A673 (cell line): ENCODE measurements at regions of chr1 and their contacts with region 1.

Region 1: DNA sequence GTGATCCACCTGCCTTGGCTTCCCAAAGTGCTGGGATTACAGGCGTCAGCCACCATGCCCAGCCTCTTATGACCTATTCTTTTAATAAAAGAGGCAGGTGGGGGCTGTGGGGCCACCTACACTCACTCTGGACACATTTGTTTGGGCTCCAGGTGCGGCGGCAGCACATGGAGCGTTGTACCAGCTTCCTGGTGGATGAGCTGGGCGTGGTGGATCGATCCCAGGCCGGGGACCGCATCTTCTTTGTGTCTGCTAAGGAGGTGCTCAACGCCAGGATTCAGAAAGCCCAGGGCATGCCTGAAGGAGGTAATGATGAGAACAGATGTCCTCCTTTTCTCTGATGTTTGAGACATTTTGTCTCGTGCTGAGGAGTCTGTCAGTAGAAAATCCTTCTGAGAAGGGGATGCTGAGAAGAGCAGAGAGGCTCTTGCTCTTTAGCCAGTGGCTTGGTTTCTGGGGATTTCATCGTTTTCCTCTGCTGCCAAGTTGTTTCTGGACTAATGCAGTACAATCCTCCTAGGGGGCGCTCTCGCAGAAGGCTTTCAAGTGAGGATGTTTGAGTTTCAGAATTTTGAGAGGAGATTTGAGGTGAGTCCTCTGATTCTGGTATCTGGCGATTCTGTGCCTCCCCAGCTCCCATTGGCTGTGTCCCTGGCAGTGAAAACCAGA is 17.9 kb upstream of the MIIP start:
- DNase-seq: peak; percentile 77
- H3K4me3 ChIP-seq: no peak overlapping the region
- H3K27ac ChIP-seq: peak overlapping the region; percentile 77
- H3K4me1 ChIP-seq: no peaks in the 10 kb centered on the region
- H3K27me3 ChIP-seq: no peaks in the 10 kb centered on the region
- CTCF ChIP-seq: peak; percentile 84

Region 2: DNA sequence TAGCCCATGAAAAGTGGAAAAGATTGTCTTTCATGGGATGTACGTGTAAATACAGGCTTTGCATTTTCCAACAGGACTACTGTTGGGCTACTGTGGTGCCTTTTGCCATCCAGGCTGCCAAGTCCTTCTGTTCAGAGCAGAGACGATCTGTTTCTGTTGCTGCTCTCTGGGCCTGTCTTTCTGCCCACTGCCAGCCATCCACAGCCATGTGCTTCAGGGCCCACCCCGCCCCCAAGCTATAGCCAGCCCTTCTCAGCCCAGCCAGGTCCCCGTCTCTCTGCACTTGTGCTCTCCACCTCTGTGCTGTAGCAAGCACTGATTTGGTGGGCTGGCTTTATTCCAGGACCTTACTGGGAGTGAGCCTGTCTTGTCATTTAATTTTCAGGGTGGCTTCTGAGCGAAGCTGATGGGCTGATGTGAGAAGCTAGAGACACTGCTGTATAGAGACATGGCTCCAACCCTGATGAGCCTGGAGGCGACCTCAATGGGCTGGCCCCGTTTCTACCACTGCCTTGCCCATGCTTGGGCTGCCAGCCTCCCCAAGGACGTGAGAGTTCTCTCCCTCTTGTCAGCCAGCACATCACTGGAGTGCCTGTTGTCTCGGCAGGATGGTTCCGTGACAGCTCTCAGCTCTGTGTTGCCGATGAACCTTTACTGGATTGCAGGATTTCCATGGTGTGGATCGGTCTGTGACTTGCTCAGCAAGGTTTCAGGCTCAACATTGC is 1388.8 kb before region 1 on chr1:
- CTCF ChIA-PET with region 1: no interaction called
- POLR2A ChIA-PET with region 1: interaction called, 11 read pairs
- intact Hi-C with region 1: no loop called
- DNase-seq: no peak
- H3K4me3 ChIP-seq: no peak overlapping the region
- H3K27ac ChIP-seq: no peak overlapping the region
- H3K4me1 ChIP-seq: peaks cover 20% of the 10 kb centered on the region
- H3K27me3 ChIP-seq: no peaks in the 10 kb centered on the region
- CTCF ChIP-seq: no peak